ENCODE measurements at regions of chr1 and their contacts with region 1.

Region 1: DNA sequence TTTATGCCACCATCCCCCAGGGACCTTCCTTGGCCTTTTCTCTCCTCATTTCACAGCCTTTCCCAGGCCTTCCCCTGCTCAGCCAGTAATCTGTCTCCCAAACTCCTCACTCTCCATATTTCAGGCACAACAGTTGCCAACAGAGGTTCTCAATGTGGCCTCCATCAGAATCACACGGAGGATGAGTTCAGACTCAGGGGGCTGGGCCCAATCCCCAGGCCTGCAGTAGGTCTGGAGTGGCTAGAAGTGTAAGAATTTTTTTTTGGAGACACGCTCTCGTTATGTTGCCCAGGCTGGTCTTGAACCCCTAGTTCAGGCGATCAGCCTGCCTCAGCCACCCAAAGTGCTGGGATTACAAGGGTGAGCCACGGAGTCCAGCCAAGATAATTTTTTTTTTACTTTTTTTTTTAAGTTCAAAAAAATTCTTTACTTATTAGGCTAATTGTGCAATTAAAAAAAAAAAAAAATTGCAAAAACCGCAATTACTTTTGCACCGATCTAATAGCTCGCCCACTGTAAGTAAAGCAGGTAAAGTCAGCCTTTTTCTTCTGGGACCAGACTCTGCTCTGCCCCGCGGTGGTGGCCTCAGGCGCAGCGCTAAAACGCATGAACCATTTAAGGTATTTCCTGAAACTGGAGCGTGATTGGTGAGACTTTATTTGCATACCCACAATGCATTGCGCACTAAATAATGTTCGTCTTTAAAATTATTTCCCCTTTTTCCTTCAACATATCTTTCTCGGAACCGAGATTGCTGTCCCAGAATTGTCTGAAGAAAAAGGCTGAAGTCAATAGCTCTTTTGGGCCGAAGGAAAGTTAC is 18.7 kb downstream of the KIAA2013 start:
- DNase-seq: peak; percentile 94 to 96 (median 95)
- H3K4me3 ChIP-seq: peak overlapping the region in 1 of 2 donors; percentile 83
- H3K4me3 Mint-ChIP-seq: peak overlapping the region; percentile 92 to 100 (median 96)
- H3K27ac ChIP-seq: peak overlapping the region; percentile 97
- H3K27ac Mint-ChIP-seq: peak overlapping the region; percentile 99 to 100 (median 100)
- H3K4me1 ChIP-seq: peaks cover 28% of the 10 kb centered on the region
- H3K4me1 Mint-ChIP-seq: peaks cover 16 to 41% (median 25%) of the 10 kb centered on the region in 4 donors
- H3K27me3 ChIP-seq: peaks cover 5% of the 10 kb centered on the region
- H3K27me3 Mint-ChIP-seq: peaks cover 1 to 9% of the 10 kb centered on the region in 2 donors

Region 2: DNA sequence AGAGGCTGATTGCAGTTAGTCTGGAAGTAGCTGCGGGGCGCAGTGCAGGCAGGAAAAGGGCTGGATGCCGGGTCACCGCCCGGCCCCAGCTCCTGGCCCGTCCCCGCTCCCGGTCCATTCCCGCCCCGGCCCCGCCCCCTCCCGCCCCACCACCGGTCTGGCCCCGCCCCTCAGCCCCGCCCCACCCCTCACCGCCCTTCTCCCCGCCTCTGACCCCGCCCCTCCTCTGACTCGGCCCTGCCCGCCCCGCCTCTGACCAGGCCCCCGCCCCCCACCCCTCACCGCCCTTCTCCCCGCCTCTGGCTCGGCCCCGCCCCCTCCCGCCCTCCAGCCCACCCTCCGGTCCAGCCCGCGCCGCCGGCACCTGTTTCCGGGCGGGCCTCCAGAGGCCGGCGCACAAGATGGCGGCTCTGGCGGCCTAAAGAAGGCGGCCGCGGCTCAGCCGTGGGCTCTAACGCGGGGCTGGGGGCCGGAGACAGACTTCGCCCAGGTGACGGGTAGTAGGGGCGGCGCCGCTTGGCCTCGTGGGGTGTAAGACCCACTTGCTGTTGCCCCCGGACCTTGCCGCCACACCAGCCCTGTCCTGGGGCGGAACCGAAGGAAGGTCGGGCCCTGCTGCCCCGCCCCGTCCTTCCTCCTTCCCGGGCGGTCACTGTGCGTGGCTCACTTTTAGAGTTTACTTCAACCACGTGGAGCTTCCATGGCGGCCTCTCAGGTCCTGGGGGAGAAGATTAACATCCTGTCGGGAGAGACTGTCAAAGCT is 634.5 kb before region 1 on chr1 and contains the start of gene UBIAD1:
- CTCF ChIA-PET with region 1: no interaction called
- POLR2A ChIA-PET with region 1: no interaction called
- intact Hi-C with region 1: loop called (anchors 2 kb)
- DNase-seq: peak; percentile 75 to 83 (median 80)
- H3K4me3 ChIP-seq: peak within 1 kb of the TSS; percentile 90 to 99
- H3K4me3 Mint-ChIP-seq: peak within 1 kb of the TSS; percentile 91 to 98 (median 95)
- H3K27ac ChIP-seq: peak within 1 kb of the TSS; percentile 88
- H3K27ac Mint-ChIP-seq: peak within 1 kb of the TSS; percentile 86 to 97 (median 95)
- H3K4me1 ChIP-seq: peaks cover 41% of the 10 kb centered on the region
- H3K4me1 Mint-ChIP-seq: peaks cover 21 to 40% (median 30%) of the 10 kb centered on the region in 4 donors
- H3K27me3 ChIP-seq: no peaks in the 10 kb centered on the region
- H3K27me3 Mint-ChIP-seq: no peaks in the 10 kb centered on the region
- total RNA-seq, gene UBIAD1: 30.3 to 33.0 TPM

Region 3: DNA sequence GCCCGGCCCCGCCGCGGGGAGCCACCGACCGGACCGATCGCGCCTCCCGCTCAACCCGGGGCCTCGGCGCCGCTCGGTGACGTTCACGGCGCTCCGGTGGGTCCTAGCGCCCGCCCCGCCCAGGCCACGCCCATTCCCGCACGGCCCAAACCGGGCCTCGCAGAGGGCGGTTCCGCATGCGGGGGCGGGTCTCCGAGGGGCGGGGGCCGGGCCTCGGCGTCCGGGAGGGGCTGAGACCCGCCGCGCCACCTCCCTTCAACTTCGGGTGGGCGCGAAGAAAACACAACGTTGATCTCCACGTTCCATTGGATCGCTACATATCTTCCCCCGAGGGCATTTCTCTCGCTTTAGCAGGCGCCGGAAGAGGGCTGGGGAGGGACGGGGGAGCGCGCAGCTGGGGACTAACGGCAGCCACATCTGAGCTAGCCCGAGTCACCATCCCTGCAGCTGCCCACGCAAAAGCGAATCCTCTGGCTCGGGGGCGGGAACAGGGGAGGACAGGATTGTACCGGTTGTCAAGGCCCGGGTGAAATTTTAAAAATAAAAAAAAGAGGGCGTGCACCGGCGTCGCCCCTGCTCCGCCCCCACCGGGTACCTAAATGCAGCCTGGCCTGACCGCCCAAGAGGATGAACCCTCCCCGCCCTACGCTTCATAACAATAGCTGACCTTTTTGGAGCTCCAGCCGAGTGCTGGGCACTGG is 226.3 kb before region 1 on chr1 and contains the start of gene MAD2L2:
- CTCF ChIA-PET with region 1: no interaction called
- POLR2A ChIA-PET with region 1: interaction called, 22 read pairs
- intact Hi-C with region 1: no loop called
- DNase-seq: peak; percentile 87 to 89 (median 88)
- H3K4me3 ChIP-seq: peak within 1 kb of the TSS; percentile 52 to 87
- H3K4me3 Mint-ChIP-seq: peak within 1 kb of the TSS; percentile 93 to 99 (median 96)
- H3K27ac ChIP-seq: peak within 1 kb of the TSS; percentile 76
- H3K27ac Mint-ChIP-seq: peak within 1 kb of the TSS; percentile 89 to 96 (median 91)
- H3K4me1 ChIP-seq: peaks cover 21% of the 10 kb centered on the region
- H3K4me1 Mint-ChIP-seq: peaks cover 10 to 25% (median 18%) of the 10 kb centered on the region in 4 donors
- H3K27me3 ChIP-seq: no peaks in the 10 kb centered on the region
- H3K27me3 Mint-ChIP-seq: peaks cover 2 to 5% of the 10 kb centered on the region in 2 donors
- total RNA-seq, gene MAD2L2: 20.7 to 22.7 TPM

Region 4: GRCh38 chr1:11805447-11806306 is 101.8 kb before region 1 on chr1 and contains the starts of genes CLCN6 and MTHFR:
- CTCF ChIA-PET with region 1: interaction called, 3 read pairs
- POLR2A ChIA-PET with region 1: interaction called, 80 read pairs
- intact Hi-C with region 1: loop called (anchors 1 kb)
- DNase-seq: peak; percentile 97 to 99 (median 98)
- H3K4me3 ChIP-seq: peak within 1 kb of the TSS; percentile 37 to 86
- H3K4me3 Mint-ChIP-seq: peak within 1 kb of the TSS; percentile 96 to 100 (median 98)
- H3K27ac ChIP-seq: peak within 1 kb of the TSS; percentile 73
- H3K27ac Mint-ChIP-seq: peak within 1 kb of the TSS; percentile 92 to 100 (median 99)
- H3K4me1 ChIP-seq: peaks cover 55% of the 10 kb centered on the region
- H3K4me1 Mint-ChIP-seq: peaks cover 35 to 76% (median 58%) of the 10 kb centered on the region in 4 donors
- H3K27me3 ChIP-seq: no peaks in the 10 kb centered on the region
- H3K27me3 Mint-ChIP-seq: no peaks in the 10 kb centered on the region
- total RNA-seq, gene CLCN6: 20.8 to 20.9 TPM
- total RNA-seq, gene MTHFR: 52.7 to 54.2 TPM

Region 5: GRCh38 chr1:11925938-11926292 is 18.4 kb after region 1 on chr1:
- CTCF ChIA-PET with region 1: no interaction called
- POLR2A ChIA-PET with region 1: interaction called, 116 read pairs
- intact Hi-C with region 1: loop called (anchors 1 kb)
- DNase-seq: peak in 1 of 5 donors; percentile 47
- H3K4me3 ChIP-seq: no peak overlapping the region
- H3K4me3 Mint-ChIP-seq: no peak overlapping the region
- H3K27ac ChIP-seq: no peak overlapping the region
- H3K27ac Mint-ChIP-seq: peak overlapping the region in 1 of 7 donors; percentile 75
- H3K4me1 ChIP-seq: peaks cover 32% of the 10 kb centered on the region
- H3K4me1 Mint-ChIP-seq: peaks cover 22 to 49% (median 32%) of the 10 kb centered on the region in 4 donors
- H3K27me3 ChIP-seq: no peaks in the 10 kb centered on the region
- H3K27me3 Mint-ChIP-seq: no peaks in the 10 kb centered on the region

Region 6: GRCh38 chr1:12019858-12020509 is 112.5 kb after region 1 on chr1:
- CTCF ChIA-PET with region 1: no interaction called
- POLR2A ChIA-PET with region 1: interaction called, 40 read pairs
- intact Hi-C with region 1: loop called (anchors 1 kb)
- DNase-seq: peak in 1 of 5 donors; percentile 5
- H3K4me3 ChIP-seq: peak overlapping the region; percentile 19 to 74
- H3K4me3 Mint-ChIP-seq: peak overlapping the region; percentile 89 to 96 (median 92)
- H3K27ac ChIP-seq: peak overlapping the region; percentile 74
- H3K27ac Mint-ChIP-seq: peak overlapping the region; percentile 29 to 96 (median 57)
- H3K4me1 ChIP-seq: peaks cover 17% of the 10 kb centered on the region
- H3K4me1 Mint-ChIP-seq: peaks cover 6 to 32% (median 12%) of the 10 kb centered on the region in 4 donors
- H3K27me3 ChIP-seq: no peaks in the 10 kb centered on the region
- H3K27me3 Mint-ChIP-seq: no peaks in the 10 kb centered on the region